Cardiac septum (tissue), 1 donor: ENCODE measurements at regions of chr2 and their contacts with region 1.

Region 1: GRCh38 chr2:95345566-95346230 is 48.6 kb downstream of the KCNIP3 start:
- DNase-seq: peak; percentile 91

Region 2: GRCh38 chr2:95240091-95240490 is 105.6 kb before region 1 on chr2:
- intact Hi-C with region 1: no loop called
- DNase-seq: no peak

Region 3: DNA sequence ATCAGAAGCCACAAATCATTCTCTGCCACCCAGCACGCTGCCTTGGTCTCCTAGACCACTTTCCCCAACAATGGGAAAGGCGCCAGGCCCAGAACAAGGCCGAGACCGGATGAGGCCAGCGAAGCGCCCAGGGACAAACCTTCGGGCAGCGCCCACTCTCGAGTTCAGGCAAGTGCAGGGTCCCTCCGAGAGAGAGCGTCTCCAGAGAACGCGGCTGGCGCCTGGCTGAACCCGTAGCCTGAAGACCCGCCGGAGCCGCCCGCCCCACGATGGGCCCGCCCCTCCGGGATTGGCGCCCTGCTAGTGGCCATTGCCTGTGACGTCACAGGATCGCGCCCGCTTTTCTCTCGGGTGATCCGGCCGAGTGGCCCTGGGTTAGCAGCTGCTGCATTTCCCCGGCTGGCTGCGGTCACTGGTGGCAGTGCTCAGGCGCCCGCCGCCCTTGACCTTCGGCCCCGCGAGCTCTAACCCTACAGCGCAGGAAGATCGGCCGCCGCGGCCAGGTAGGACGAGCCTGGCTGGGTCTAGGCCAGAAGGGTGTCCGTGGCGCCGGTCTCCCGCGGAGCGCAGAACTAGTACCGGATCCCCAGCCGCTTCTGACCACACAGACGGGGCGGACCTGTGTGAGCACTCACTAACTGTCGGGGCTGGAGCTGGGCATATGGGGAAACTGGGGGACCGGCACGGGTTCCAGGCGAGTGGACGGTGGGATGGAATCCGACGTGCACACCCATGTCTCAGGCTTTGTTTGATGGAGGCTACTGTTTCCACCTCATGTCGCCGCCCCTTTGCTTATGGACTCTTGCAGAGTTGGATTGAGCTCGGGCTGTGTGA is 56.9 kb after region 1 on chr2 and contains the start of gene FAHD2A:
- intact Hi-C with region 1: loop called (anchors 2 kb)
- DNase-seq: peak; percentile 98
- total RNA-seq, gene FAHD2A: 28.8 TPM

Region 4: GRCh38 chr2:95728878-95729596 is 383.3 kb after region 1 on chr2:
- intact Hi-C with region 1: loop called (anchors 2 kb)
- DNase-seq: no peak